ENCODE measurements at regions of chr12 and their contacts with region 1.

Region 1: DNA sequence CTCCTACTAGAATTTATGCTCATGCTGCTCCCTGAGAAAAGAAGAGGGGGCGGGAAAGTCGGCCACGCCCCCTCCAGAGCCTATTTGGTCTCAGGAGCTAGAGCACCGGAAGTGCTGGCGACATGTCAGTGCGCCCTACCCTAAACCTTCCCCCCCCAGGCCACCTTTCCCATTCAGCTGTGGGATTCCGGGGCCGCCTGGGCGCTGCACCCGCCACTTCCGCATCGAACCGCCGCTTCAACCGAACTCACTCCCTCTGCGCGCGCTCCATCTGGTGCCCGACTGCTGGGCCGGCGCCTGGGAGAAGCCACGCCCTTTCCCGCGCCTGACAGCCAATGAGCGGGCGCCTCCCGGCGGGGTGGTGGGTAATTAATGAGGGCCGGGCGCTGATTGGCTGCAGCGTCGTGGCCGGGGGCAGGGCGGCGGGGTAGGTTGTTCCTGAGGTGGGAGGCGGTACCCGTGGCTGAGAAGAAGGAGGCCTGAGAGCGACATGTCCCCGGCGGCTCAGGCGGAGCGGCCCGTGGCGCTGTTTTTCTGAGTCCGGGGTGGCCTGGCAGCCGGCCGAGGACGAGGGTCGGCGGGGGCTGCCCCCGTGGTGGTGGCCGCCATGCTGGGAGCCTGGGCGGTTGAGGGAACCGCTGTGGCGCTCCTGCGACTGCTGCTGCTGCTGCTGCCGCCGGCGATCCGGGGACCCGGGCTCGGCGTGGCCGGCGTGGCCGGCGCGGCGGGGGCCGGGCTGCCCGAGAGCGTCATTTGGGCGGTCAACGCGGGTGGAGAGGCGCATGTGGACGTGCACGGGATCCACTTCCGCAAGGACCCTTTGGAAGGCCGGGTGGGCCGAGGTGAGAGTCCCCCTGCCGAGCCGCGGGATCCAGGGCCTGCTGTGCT is at the start of gene MLEC:
- DNase-seq: peak; percentile 99
- ATAC-seq: peak; percentile 86
- H3K4me3 Mint-ChIP-seq: peak within 1 kb of the TSS; percentile 92
- H3K27ac Mint-ChIP-seq: peak within 1 kb of the TSS; percentile 85
- H3K4me1 Mint-ChIP-seq: peaks cover 46% of the 10 kb centered on the region
- H3K27me3 Mint-ChIP-seq: no peaks in the 10 kb centered on the region
- total RNA-seq, gene MLEC: 70.6 to 89.5 TPM

Region 2: GRCh38 chr12:120437754-120438494 is 249.0 kb before region 1 on chr12 and contains the start of gene COX6A1:
- CTCF ChIA-PET with region 1: no interaction called
- POLR2A ChIA-PET with region 1: no interaction called
- intact Hi-C with region 1: loop called (anchors 1 to 2 kb)
- DNase-seq: peak; percentile 99
- ATAC-seq: peak; percentile 97
- H3K4me3 Mint-ChIP-seq: peak within 1 kb of the TSS; percentile 99
- H3K27ac Mint-ChIP-seq: peak within 1 kb of the TSS; percentile 99
- H3K4me1 Mint-ChIP-seq: peaks cover 23% of the 10 kb centered on the region
- H3K27me3 Mint-ChIP-seq: peaks cover 4% of the 10 kb centered on the region
- total RNA-seq, gene COX6A1: 424 to 495 TPM

Region 3: DNA sequence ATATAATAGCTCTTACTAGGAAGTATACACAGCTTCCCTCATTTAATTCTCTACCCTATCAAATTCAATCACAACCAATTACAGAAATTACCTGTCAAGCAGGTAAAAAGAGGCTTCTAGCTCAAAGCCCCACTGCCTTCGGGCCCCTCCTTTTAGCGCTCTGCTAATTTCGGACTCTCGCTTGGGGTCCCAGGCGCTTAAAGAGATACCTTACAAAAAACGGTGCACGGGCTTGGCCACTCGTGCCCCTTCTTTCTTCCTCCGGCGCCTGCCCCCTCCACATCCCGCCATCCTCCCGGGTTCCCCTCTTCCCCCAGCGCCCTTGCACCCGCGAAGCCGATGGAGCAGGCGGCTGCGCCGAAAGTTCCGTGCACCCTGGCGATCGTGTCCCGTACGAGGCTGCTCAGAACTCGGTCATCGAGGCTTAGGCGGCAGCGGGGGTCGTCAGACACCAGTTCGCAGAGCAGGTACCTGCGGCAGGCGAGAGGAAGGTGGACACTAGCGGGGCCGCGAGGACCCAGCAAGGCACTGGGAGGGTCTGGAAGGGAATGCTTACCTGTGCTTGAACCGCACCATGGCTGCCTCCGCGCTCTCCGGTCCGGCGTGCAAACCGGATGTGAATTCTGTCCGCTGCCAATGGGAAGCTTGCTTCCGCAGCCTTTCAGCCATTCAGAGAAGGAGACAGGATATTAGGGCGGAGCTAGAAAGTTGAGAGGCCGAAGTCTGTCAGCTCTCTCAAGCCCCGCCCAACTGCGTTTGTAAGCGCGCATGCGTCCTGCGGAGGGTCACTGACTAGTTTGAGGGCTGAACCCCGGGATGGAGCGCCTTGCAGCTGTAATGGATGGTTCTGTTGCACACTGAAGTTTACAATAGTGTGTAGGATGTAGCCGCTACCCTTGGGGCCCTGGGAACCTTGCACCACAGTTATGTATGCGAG is 105.9 kb before region 1 on chr12 and contains the start of gene POP5:
- CTCF ChIA-PET with region 1: interaction called, 5 read pairs
- POLR2A ChIA-PET with region 1: interaction called, 3 read pairs
- intact Hi-C with region 1: loop called (anchors 1 kb)
- DNase-seq: peak; percentile 96
- ATAC-seq: peak; percentile 97
- H3K4me3 Mint-ChIP-seq: peak within 1 kb of the TSS; percentile 98
- H3K27ac Mint-ChIP-seq: peak within 1 kb of the TSS; percentile 91
- H3K4me1 Mint-ChIP-seq: peaks cover 35% of the 10 kb centered on the region
- H3K27me3 Mint-ChIP-seq: peaks cover 10% of the 10 kb centered on the region
- total RNA-seq, gene POP5: 44.8 to 52.6 TPM

Region 4: DNA sequence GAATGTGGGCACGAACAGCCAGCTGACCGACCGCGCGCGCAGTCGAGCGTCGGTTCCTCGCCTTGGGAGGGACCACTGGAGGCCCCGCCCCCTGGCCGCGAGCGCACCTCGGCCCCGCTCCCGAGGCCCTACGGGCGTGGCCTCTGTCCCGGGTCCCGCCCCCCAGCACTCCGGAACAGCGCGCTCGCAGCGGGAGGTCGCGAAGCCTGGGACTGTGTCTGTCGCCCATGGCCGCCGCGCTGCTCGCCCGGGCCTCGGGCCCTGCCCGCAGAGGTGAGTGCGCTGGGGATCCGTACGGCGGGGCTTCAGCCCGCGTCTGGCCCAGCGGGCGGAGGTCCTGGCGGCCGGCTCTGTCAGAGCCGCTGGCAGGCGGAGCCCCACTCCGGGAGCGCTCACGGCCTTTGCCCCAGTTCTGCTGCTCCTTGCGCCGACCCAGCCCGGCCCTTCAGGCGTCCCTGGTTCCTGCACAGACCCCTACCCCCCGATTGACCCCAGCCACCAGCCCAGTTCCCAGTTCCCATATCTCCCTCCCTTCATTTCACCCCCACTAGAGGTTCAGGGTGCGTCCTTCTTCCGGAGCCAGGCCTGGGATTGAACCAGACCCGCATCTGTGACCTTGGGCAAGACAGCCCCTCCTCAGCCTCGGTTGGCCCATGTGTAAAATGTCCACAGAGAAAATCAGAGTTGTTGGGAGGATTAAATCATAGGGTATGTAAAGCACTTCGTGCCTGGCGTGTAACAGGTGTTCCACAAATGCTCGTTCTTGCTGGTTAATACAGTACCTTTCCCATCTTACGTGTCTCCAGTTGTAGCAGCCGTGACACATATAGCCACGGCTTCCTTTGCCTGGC is 39.0 kb after region 1 on chr12 and contains the start of gene ACADS:
- CTCF ChIA-PET with region 1: no interaction called
- POLR2A ChIA-PET with region 1: no interaction called
- intact Hi-C with region 1: loop called in 1 of 2 experiments (anchors 1 kb)
- DNase-seq: peak; percentile 96
- ATAC-seq: peak; percentile 100
- H3K4me3 Mint-ChIP-seq: peak within 1 kb of the TSS; percentile 78
- H3K27ac Mint-ChIP-seq: peak within 1 kb of the TSS; percentile 64
- H3K4me1 Mint-ChIP-seq: peaks cover 17% of the 10 kb centered on the region
- H3K27me3 Mint-ChIP-seq: no peaks in the 10 kb centered on the region
- total RNA-seq, gene ACADS: 10.1 to 17.4 TPM

Region 5: DNA sequence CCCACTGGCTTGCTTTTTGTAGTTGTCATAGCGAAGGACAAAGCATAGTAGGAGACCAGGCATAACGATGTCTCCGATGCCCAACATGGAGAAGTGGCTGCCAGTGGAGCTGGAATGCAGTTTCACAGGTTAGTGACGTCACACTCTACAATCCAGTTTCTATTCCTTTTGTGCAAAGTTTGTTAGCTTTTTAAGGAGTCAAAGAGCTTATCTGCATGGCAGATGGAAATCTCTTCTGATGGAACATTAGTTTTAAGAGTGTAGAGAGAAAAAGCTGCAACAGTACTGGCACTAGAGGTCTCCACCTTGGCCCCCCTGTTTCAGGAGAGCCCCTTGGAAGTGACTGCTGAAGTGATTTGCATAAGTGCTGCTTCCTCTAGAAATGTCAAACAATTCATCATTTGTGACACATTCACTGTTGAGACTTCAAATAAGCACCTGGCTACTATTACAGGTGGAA is 80.6 kb after region 1 on chr12:
- CTCF ChIA-PET with region 1: no interaction called
- POLR2A ChIA-PET with region 1: no interaction called
- intact Hi-C with region 1: no loop called
- DNase-seq: no peak
- ATAC-seq: no peak
- H3K4me3 Mint-ChIP-seq: no peak overlapping the region
- H3K27ac Mint-ChIP-seq: no peak overlapping the region
- H3K4me1 Mint-ChIP-seq: peaks cover 2% of the 10 kb centered on the region
- H3K27me3 Mint-ChIP-seq: no peaks in the 10 kb centered on the region

Region 6: DNA sequence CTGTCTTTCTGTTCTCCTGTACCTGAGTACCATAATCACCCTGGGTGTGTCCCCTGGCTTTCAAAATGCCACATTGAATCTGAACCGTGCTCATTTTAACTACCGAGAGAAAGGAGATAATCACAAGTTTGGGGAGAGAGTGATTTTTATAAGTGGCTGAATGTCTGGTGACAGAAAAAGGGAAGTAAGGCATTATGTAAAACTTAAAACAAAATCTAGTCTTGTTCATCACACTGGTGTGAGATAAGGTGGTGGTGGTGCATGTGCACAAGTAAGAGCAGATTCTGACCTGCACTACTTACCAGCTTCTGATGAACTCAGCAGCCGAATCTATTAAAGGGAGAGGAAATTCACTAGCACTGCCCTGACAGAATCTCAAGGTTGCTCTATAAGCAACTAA is 160.9 kb after region 1 on chr12:
- CTCF ChIA-PET with region 1: no interaction called
- POLR2A ChIA-PET with region 1: no interaction called
- intact Hi-C with region 1: no loop called
- DNase-seq: no peak
- ATAC-seq: no peak
- H3K4me3 Mint-ChIP-seq: no peak overlapping the region
- H3K27ac Mint-ChIP-seq: peak overlapping the region; percentile 11
- H3K4me1 Mint-ChIP-seq: peaks cover 62% of the 10 kb centered on the region
- H3K27me3 Mint-ChIP-seq: no peaks in the 10 kb centered on the region

Region 7: DNA sequence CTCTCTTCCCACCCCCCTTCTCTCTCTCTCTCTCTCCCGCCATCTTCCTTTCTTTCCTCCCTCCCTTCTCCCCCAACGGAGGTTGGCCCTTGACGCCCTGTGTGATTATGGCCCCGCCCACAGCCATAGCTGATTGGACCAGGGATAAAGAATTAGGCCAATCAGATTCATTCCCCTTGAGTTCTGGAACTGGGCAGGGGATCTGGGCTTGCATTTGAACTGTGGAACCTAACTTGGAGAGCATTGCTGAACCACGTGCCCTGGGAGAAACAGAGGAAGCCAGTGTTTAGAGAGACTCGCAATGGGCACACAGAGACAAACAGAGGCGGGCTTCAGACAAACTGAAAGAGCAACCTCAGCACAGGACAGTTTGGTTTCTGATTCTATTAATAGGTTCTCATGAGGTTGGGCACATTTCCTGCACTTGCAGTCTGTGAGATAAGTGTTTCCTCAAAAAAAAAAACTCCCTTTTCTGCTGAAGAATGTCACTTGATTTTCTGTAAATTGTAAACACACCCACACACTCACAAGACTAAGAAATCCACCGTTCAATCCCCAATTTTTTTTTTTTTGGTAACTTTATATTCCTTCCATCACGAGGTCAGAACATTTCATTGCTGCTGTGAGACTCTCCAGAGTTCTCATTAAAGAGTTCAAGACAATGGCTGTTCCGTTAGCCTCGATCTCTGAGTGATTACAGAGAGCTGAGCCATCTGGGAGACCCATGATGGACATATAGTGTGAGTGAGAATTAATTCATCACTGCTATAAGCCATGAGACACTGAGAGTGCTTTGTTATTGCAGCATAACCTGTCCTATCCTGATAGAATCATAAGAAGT is 442.3 kb after region 1 on chr12:
- CTCF ChIA-PET with region 1: no interaction called
- POLR2A ChIA-PET with region 1: no interaction called
- intact Hi-C with region 1: loop called in 1 of 2 experiments (anchors 5 kb)
- DNase-seq: peak; percentile 90
- ATAC-seq: peak; percentile 83
- H3K4me3 Mint-ChIP-seq: peak overlapping the region; percentile 63
- H3K27ac Mint-ChIP-seq: peak overlapping the region; percentile 98
- H3K4me1 Mint-ChIP-seq: peaks cover 68% of the 10 kb centered on the region
- H3K27me3 Mint-ChIP-seq: no peaks in the 10 kb centered on the region

Region 8: DNA sequence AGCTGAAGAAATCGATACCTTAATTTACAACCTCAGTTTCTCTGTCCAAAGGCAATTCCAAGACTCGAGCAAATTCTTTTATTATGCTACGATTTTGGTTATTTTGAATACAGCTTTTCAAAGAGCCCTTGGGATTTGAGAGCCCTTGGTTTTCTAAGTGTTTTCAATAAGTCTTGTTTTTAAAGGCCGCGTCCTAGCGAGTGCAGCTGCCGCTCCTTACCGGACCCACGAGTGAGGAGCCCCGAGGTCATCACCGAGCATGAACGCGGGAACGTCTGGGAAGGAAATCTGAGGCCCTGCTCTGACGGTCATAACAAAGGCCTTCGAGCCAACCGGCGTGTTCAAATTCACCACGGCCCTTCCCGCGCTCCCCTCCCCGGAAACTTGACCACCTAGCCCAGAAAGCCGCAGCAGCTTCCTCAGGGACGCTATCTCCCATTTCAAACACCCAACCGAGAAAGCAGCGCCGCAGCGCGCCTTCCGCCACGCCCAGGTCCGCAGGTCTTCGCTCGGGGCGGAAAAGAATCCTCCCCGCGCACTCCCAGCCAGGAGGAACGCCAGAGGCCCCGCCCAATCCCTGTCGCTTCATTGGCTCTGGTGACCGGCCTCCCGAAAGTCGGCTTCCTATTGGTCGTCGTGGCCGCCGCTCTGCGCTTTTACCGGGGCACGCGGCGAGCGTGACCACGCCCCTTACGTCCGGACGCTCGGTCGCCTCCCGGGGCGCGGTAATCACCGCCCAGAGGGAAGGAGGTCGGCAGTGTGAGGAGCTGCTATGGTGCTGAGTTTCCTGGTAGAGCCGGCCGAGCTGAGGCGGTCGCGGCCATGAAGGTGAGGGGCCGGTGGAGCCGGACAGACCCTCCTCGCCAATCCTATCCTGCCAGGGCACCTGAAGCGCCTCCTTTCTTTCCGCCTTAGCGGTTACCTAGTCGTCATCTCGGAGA is 712.7 kb after region 1 on chr12 and contains the start of gene RNF34:
- CTCF ChIA-PET with region 1: no interaction called
- POLR2A ChIA-PET with region 1: no interaction called
- intact Hi-C with region 1: loop called in 1 of 2 experiments (anchors 2 kb)
- DNase-seq: peak; percentile 99
- ATAC-seq: peak; percentile 91
- H3K4me3 Mint-ChIP-seq: peak within 1 kb of the TSS; percentile 86
- H3K27ac Mint-ChIP-seq: peak within 1 kb of the TSS; percentile 93
- H3K4me1 Mint-ChIP-seq: peaks cover 33% of the 10 kb centered on the region
- H3K27me3 Mint-ChIP-seq: no peaks in the 10 kb centered on the region
- total RNA-seq, gene RNF34: 64.2 to 75.7 TPM